Prostate gland (tissue), 2 donors: ENCODE measurements at regions of chr14 and their contacts with region 1.

Region 1: GRCh38 chr14:58072288-58073071 is 79.5 kb downstream of the ARMH4 start:
- DNase-seq: peak; percentile 35
- H3K4me3 ChIP-seq: no peak overlapping the region
- H3K27ac ChIP-seq: no peak overlapping the region
- H3K4me1 ChIP-seq: no peaks in the 10 kb centered on the region
- H3K27me3 ChIP-seq: no peaks in the 10 kb centered on the region
- CTCF ChIP-seq: peak; percentile 57 to 73 (median 68)
- POLR2A ChIP-seq: no peak

Region 2: DNA sequence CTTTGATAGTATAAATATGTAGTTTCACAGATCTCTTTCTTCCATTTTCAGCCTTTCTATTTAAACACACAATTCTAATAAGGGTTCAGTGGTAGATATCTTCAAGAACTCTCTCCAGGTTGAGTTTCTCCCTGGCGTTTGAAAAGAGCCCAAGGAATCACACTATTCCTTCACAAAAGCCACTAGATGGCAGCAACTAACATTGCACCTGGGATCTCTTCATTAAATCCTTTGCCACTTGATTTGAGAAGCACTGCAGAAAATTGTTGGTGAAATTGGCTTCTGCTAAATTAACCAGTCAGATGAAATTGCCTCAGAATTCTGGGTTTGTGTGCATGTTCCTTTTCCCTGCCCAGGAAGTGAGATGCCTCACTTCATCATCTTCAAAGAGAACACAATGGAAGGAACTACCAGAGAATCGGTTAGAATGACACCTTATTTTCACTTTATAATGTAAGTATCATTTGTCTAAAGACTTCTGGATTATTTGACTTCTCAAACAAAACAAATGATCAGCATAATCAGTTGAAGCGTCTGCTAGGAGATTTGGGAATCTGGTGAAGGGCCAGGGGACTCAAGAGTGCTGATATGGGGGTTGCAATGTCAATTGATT is 585.6 kb before region 1 on chr14:
- intact Hi-C with region 1: loop called (anchors 2 kb)
- DNase-seq: no peak
- H3K4me3 ChIP-seq: no peak overlapping the region
- H3K27ac ChIP-seq: no peak overlapping the region
- H3K4me1 ChIP-seq: no peaks in the 10 kb centered on the region
- H3K27me3 ChIP-seq: no peaks in the 10 kb centered on the region
- CTCF ChIP-seq: peak in 3 of 4 experiments; percentile 35 to 58 (median 45)
- POLR2A ChIP-seq: no peak

Region 3: GRCh38 chr14:57533214-57533613 is 539.3 kb before region 1 on chr14:
- intact Hi-C with region 1: loop called (anchors 5 kb)
- DNase-seq: no peak
- H3K4me3 ChIP-seq: no peak overlapping the region
- H3K27ac ChIP-seq: no peak overlapping the region
- H3K4me1 ChIP-seq: no peaks in the 10 kb centered on the region
- H3K27me3 ChIP-seq: no peaks in the 10 kb centered on the region
- CTCF ChIP-seq: peak in 3 of 4 experiments; percentile 25 to 45 (median 40)
- POLR2A ChIP-seq: no peak

Region 4: GRCh38 chr14:57962325-57963035 is 110.0 kb before region 1 on chr14:
- intact Hi-C with region 1: loop called (anchors 5 kb)
- DNase-seq: no peak
- H3K4me3 ChIP-seq: no peak overlapping the region
- H3K27ac ChIP-seq: peak overlapping the region; percentile 33 to 42
- H3K4me1 ChIP-seq: no peaks in the 10 kb centered on the region
- H3K27me3 ChIP-seq: no peaks in the 10 kb centered on the region
- CTCF ChIP-seq: peak in 1 of 4 experiments; percentile 9
- POLR2A ChIP-seq: no peak